Activated B cell treated with CpG ODN at 0.5 μM for 24 hours (primary cell): ENCODE measurements at regions of chr11 and their contacts with region 1.

Region 1: GRCh38 chr11:124586238-124586860 is 16.6 kb downstream of the OR8A1 start:
- DNase-seq: peak; percentile 20
- ATAC-seq: no peak
- H3K4me3 Mint-ChIP-seq: no peak overlapping the region
- H3K27ac Mint-ChIP-seq: no peak overlapping the region
- H3K4me1 Mint-ChIP-seq: no peaks in the 10 kb centered on the region
- H3K27me3 Mint-ChIP-seq: peaks cover 12% of the 10 kb centered on the region
- CTCF ChIP-seq: no peak

Region 2: GRCh38 chr11:123640677-123641494 is 945.5 kb before region 1 on chr11:
- CTCF ChIA-PET with region 1: no interaction called
- POLR2A ChIA-PET with region 1: no interaction called
- intact Hi-C with region 1: loop called (anchors 10 kb)
- DNase-seq: peak; percentile 33
- ATAC-seq: peak; percentile 50
- H3K4me3 Mint-ChIP-seq: no peak overlapping the region
- H3K27ac Mint-ChIP-seq: no peak overlapping the region
- H3K4me1 Mint-ChIP-seq: peaks cover 3% of the 10 kb centered on the region
- H3K27me3 Mint-ChIP-seq: peaks cover 35% of the 10 kb centered on the region
- CTCF ChIP-seq: no peak

Region 3: DNA sequence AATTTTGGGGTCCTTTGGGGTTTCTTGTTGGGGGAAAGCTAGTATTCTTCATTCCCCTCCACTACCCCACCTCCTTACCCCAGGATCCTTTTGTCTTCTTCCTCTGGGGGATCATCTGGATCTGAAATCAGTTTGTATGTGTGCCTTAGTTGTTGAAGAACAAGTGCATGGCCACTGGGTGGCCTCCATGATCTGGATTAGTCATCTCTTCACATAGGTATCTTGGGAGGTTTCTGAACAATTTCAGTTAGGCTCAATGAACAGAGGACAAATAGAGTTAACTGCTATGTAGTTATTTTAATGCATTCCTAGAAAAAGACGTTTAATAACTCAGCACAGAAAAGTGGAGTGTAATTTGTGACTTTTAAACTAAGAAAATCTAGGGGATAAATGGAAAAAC is 478.2 kb before region 1 on chr11:
- CTCF ChIA-PET with region 1: no interaction called
- POLR2A ChIA-PET with region 1: no interaction called
- intact Hi-C with region 1: loop called (anchors 1 kb)
- DNase-seq: no peak
- ATAC-seq: no peak
- H3K4me3 Mint-ChIP-seq: no peak overlapping the region
- H3K27ac Mint-ChIP-seq: no peak overlapping the region
- H3K4me1 Mint-ChIP-seq: peaks cover 18% of the 10 kb centered on the region
- H3K27me3 Mint-ChIP-seq: peaks cover 8% of the 10 kb centered on the region
- CTCF ChIP-seq: no peak

Region 4: GRCh38 chr11:124402326-124402922 is 183.9 kb before region 1 on chr11:
- CTCF ChIA-PET with region 1: interaction called, 8 read pairs
- POLR2A ChIA-PET with region 1: no interaction called
- intact Hi-C with region 1: loop called (anchors 1 kb)
- DNase-seq: no peak
- ATAC-seq: peak; percentile 40
- H3K4me3 Mint-ChIP-seq: no peak overlapping the region
- H3K27ac Mint-ChIP-seq: no peak overlapping the region
- H3K4me1 Mint-ChIP-seq: peaks cover 6% of the 10 kb centered on the region
- H3K27me3 Mint-ChIP-seq: peaks cover 6% of the 10 kb centered on the region
- CTCF ChIP-seq: no peak

Region 5: GRCh38 chr11:124415356-124415923 is 170.9 kb before region 1 on chr11:
- CTCF ChIA-PET with region 1: interaction called, 7 read pairs
- POLR2A ChIA-PET with region 1: no interaction called
- intact Hi-C with region 1: loop called (anchors 1 kb)
- DNase-seq: no peak
- ATAC-seq: no peak
- H3K4me3 Mint-ChIP-seq: no peak overlapping the region
- H3K27ac Mint-ChIP-seq: no peak overlapping the region
- H3K4me1 Mint-ChIP-seq: no peaks in the 10 kb centered on the region
- H3K27me3 Mint-ChIP-seq: peaks cover 15% of the 10 kb centered on the region
- CTCF ChIP-seq: no peak

Region 6: DNA sequence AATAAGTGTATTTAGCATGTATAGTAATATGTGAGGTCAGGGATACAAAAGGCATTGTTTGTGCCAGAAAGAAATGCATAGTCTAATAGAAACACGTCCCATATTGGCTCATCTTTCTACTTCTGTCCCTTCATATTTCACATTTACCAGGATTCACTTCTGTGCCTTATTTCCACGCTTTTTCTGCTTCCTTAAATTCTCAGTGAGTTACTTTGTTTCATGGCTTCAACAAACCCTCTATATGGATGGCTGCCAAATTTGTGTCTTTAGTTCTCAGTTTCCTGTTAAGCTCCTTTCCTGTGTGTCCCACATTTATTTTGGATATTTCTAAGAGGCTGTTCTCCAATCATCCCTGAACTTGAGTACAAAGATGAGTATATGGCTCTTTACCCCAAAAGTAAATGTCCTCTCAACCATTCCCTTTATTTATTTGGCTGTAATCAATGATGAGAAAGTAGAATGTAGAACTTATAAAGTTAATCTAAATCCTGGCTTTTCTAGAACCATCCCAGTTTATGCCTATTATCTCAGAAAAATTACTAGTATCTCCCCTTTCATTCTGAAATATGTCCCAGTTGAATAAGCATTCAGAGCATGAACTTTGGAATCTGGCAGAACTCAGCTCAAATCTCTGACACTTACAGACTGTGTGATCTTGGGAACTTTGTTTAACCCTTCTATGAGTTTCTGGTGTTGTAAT is 66.3 kb before region 1 on chr11:
- CTCF ChIA-PET with region 1: no interaction called
- POLR2A ChIA-PET with region 1: no interaction called
- intact Hi-C with region 1: no loop called
- DNase-seq: no peak
- ATAC-seq: no peak
- H3K4me3 Mint-ChIP-seq: no peak overlapping the region
- H3K27ac Mint-ChIP-seq: no peak overlapping the region
- H3K4me1 Mint-ChIP-seq: no peaks in the 10 kb centered on the region
- H3K27me3 Mint-ChIP-seq: peaks cover 2% of the 10 kb centered on the region
- CTCF ChIP-seq: no peak